ENCODE measurements at regions of chr14 and their contacts with region 1.

Region 1: DNA sequence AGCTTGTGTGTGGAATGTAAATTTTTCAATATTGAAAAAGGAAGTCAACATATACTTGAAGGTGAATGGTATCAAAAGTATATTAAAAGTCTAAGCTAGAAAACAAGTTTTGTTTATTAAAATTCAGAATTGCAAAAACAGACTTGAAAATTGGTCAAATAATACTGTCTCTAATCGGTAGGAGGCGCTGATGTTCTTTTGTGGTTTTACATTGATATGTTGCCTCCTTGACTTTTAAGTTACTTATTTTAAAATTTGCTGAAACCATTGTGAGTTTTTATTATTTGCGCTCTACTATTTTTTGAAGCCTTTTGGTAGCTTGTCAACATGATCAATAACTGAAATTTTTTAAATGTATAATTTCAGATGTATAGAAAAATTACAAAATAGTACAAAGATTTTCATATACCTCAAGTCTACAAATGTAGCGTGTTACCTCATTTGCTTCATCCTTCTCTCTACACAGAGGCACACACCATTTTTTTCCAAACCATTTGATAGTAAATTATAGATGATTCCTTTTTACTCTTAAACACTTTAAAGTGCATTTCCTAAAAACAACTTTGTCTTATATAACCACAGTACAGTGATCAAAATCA is 6.9 kb downstream of the RTRAF start:
- DNase-seq: peak in 1 of 4 experiments; percentile 38
- ATAC-seq: no peak
- H3K4me3 ChIP-seq: no peak overlapping the region
- H3K27ac ChIP-seq: no peak overlapping the region
- H3K4me1 ChIP-seq: no peaks in the 10 kb centered on the region
- H3K27me3 ChIP-seq: no peaks in the 10 kb centered on the region
- CTCF ChIP-seq: peak in 2 of 3 experiments; percentile 28 to 68; a peak in 4 of 6 replicates
- EP300 ChIP-seq: no peak
- POLR2A ChIP-seq: no peak
- RAD21 ChIP-seq: peak; percentile 47 to 63; a peak in 3 of 4 replicates

Region 2: GRCh38 chr14:52131640-52132320 is 135.5 kb after region 1 on chr14:
- CTCF ChIA-PET with region 1: interaction called, 5 read pairs
- POLR2A ChIA-PET with region 1: no interaction called
- in situ Hi-C with region 1: no loop called
- intact Hi-C with region 1: loop called (anchors 5 kb)
- DNase-seq: peak; percentile 32 to 67 (median 48)
- ATAC-seq: peak; percentile 91
- H3K4me3 ChIP-seq: no peak overlapping the region
- H3K27ac ChIP-seq: no peak overlapping the region
- H3K4me1 ChIP-seq: no peaks in the 10 kb centered on the region
- H3K27me3 ChIP-seq: no peaks in the 10 kb centered on the region
- CTCF ChIP-seq: peak; percentile 49 to 60 (median 54)
- EP300 ChIP-seq: no peak
- POLR2A ChIP-seq: no peak
- RAD21 ChIP-seq: peak; percentile 28 to 63; a peak in 3 of 4 replicates